Activated T-helper 2 cell treated with anti-CD3 and anti-CD28 coated beads, Interferon-gamma antibody, Interleukin-2, Interleukin-4, amounts not matched to agents 10 μg/mL and 5 μg/mL and 100 μg/mL, durations not matched to agents 14 hours and 24 hours and 36 hours (primary cell): ENCODE measurements at regions of chr2 and their contacts with region 1.

Region 1: DNA sequence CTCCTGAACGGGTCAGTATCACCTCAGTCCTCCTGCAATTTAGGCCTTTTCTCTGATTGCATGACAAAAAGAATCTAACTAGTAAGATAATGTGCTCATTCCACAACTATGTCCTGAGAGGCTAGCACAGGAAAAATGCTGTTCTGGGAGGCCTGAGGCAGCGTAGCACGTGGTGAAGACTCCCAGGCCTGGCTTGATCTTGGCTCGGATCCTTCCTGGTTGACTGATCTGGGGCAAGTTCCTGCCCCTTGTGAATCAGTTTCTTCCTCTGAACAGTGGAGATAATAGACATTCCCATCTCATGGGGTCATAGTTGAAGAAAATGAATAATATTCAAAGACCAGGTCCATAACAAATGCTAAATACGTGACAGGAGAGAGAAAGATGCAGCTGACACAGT is 12.3 kb downstream of the FBLN7 start:
- DNase-seq: no peak
- H3K4me3 Mint-ChIP-seq: no peak overlapping the region
- H3K27ac Mint-ChIP-seq: no peak overlapping the region
- H3K4me1 Mint-ChIP-seq: peaks cover 14% of the 10 kb centered on the region
- H3K27me3 Mint-ChIP-seq: peaks cover 4% of the 10 kb centered on the region

Region 2: GRCh38 chr2:112065966-112066365 is 84.5 kb before region 1 on chr2:
- intact Hi-C with region 1: no loop called
- DNase-seq: no peak
- H3K4me3 Mint-ChIP-seq: no peak overlapping the region
- H3K27ac Mint-ChIP-seq: peak overlapping the region; percentile 63
- H3K4me1 Mint-ChIP-seq: peaks cover 32% of the 10 kb centered on the region
- H3K27me3 Mint-ChIP-seq: no peaks in the 10 kb centered on the region

Region 3: DNA sequence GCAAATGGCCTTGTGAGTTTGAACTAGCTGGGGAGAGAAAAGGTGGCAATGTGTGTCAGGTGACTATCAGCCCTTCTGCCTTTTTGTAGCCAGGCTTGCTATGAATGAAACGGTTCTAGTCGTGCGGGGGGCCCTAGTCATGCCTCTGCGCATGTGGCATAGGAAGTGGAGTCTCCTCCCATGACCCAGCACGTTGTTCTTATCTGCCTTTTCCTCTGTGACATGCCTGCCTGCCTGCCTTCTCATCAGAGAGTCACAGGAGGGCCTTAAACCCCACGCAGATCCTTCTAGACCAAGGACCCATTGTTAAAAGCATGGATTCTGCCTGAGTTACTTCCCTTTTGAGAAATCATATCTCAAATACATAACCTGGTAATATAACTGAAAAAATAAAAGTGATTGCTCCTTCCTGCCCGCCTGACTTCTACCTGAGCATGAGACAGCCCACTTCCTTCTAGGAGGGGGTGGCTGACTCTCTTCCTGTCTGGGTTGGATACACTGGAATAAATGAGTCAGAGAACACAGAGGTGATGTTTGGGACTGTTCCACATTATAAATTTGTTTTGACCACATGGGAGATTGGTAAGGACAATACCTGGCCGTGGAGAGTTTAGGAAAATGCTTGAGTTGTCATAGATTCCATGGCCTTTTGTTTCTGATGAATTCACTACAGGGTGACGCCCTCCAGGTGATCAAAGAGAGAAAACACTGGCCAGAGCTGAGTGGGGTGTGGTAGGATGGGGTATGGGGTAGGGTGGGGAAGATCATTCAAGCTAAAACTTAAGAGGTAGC is 37.6 kb after region 1 on chr2:
- intact Hi-C with region 1: loop called (anchors 5 kb)
- DNase-seq: peak; percentile 73
- H3K4me3 Mint-ChIP-seq: peak overlapping the region; percentile 31
- H3K27ac Mint-ChIP-seq: peak overlapping the region; percentile 98
- H3K4me1 Mint-ChIP-seq: peaks cover 70% of the 10 kb centered on the region
- H3K27me3 Mint-ChIP-seq: no peaks in the 10 kb centered on the region